Activated T-helper 1 cell treated with anti-CD3 and anti-CD28 coated beads, Interleukin-12 subunit alpha, Interleukin-12 subunit beta, Interleukin-2, Interleukin-4 antibody, amounts not matched to agents 30 ng/mL and 10 ng/mL and 1 ng/mL, durations not matched to agents 14 hours and 24 hours and 36 hours (primary cell): ENCODE measurements at regions of chr19 and their contacts with region 1.

Region 1: DNA sequence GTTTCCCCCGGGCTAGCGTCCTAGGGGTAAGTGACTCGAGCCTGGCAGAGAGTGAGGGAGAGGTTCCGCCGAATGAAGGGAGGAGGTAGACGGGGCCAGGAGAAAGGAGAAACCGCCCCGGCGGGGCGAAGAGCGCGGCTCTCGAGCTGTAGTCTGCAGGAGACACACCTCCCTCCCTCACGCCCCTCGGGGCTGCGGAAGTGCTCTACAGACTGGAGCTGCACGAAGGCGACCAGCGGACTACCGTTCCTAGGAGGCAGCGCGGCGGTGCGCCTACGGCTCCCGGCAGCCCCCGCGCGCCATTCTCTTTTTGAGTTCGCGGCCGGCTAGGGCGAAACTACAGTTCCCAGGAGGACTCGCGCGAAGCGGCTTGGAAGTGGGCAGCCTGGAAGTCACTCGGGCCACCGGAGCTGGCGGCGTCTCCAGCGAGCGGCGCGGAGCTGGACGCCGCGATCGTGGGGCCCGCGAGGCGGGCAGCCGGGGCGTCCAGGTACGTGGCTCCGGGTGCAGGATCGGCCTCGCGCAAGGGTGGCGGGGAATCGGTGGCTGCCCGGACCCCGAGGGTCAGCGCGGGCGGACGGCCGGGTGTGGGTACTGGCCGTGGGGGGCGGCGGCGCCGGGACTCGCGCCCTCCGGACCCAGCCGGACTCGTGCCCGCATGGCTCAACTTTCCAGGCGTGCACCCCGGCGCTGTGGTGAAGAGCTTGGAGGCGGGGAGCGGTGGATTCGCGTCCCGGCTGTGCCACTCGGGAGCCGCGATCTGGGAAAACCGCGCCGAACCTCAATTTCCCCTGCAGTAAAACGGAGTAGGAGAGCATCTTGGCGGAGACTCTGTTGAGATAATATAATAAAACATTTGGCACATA is at the start of gene SIPA1L3:
- DNase-seq: peak; percentile 91
- H3K4me3 Mint-ChIP-seq: peak within 1 kb of the TSS; percentile 93
- H3K27ac Mint-ChIP-seq: peak within 1 kb of the TSS; percentile 68
- H3K4me1 Mint-ChIP-seq: peaks cover 17% of the 10 kb centered on the region
- H3K27me3 Mint-ChIP-seq: peaks cover 2% of the 10 kb centered on the region
- total RNA-seq, gene SIPA1L3: 16.7 and 18.4 TPM in 2 replicates

Region 2: GRCh38 chr19:37217855-37218591 is 689.1 kb before region 1 on chr19 and contains the start of gene ZNF383:
- intact Hi-C with region 1: loop called (anchors 2 kb)
- DNase-seq: peak; percentile 78
- H3K4me3 Mint-ChIP-seq: peak within 1 kb of the TSS; percentile 96
- H3K27ac Mint-ChIP-seq: peak within 1 kb of the TSS; percentile 90
- H3K4me1 Mint-ChIP-seq: peaks cover 20% of the 10 kb centered on the region
- H3K27me3 Mint-ChIP-seq: no peaks in the 10 kb centered on the region
- total RNA-seq, gene ZNF383: 6.3 TPM in 2 replicates

Region 3: DNA sequence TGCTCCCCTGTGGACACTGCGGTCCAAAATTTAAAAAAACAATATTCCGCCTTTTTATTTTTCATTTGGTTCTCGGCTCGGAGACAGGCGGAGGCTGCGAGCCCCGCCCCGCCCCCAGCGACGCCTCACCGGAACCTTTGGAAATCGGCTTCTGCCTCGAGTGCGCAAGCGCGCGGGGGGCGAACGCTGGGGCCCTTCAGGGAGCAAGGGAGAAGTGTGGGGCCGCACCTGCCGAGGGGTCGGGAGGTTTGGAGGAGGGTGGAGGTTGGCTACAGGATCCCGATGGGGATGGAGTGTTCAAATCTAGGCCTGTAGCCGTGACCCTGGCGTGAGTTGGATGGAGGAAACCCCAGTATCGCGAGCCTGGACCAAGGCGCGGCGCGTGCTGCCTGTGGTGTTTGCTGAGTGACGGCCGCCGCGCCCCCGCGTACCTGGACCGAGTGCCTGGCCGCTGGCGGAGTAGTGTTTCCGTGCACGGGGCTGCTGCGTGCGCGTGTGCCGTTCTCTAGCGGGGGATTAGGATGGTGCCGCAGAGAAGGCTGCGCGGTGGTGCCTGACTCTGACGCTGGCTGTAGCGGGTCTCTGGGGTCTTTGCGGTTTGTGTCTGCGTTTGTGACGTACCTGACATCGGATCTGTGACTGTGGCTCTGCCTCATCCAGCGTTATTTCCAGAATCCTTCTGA is 251.3 kb before region 1 on chr19:
- intact Hi-C with region 1: loop called (anchors 1 kb)
- DNase-seq: peak; percentile 83
- H3K4me3 Mint-ChIP-seq: peak overlapping the region; percentile 90
- H3K27ac Mint-ChIP-seq: peak overlapping the region; percentile 93
- H3K4me1 Mint-ChIP-seq: peaks cover 28% of the 10 kb centered on the region
- H3K27me3 Mint-ChIP-seq: no peaks in the 10 kb centered on the region

Region 4: DNA sequence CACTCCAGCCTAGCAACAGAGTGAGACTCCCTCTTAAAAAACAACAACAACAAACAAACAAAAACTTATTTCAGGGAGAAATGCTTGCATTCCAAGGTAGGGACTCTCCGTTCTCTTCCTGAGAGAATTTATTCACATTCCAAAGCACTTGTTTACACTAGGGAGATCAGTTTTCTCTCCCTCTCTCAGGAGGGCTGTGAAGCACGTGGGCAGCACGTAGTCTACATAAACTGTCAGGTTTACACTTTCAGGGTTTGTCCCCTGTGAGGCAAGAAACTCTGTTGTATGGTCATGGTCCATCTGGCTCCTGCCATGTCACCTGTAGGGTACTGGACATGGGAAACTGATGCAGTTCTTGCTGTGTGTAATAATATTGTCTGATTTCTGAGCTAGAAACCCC is 32.3 kb before region 1 on chr19:
- intact Hi-C with region 1: no loop called
- DNase-seq: no peak
- H3K4me3 Mint-ChIP-seq: no peak overlapping the region
- H3K27ac Mint-ChIP-seq: no peak overlapping the region
- H3K4me1 Mint-ChIP-seq: no peaks in the 10 kb centered on the region
- H3K27me3 Mint-ChIP-seq: peaks cover 2% of the 10 kb centered on the region

Region 5: GRCh38 chr19:38049105-38049649 is 142.1 kb after region 1 on chr19:
- intact Hi-C with region 1: loop called (anchors 1 kb)
- DNase-seq: peak; percentile 61
- H3K4me3 Mint-ChIP-seq: peak overlapping the region; percentile 79
- H3K27ac Mint-ChIP-seq: peak overlapping the region; percentile 92
- H3K4me1 Mint-ChIP-seq: peaks cover 36% of the 10 kb centered on the region
- H3K27me3 Mint-ChIP-seq: no peaks in the 10 kb centered on the region

Region 6: GRCh38 chr19:38122402-38123093 is 215.4 kb after region 1 on chr19:
- intact Hi-C with region 1: no loop called
- DNase-seq: no peak
- H3K4me3 Mint-ChIP-seq: no peak overlapping the region
- H3K27ac Mint-ChIP-seq: no peak overlapping the region
- H3K4me1 Mint-ChIP-seq: no peaks in the 10 kb centered on the region
- H3K27me3 Mint-ChIP-seq: no peaks in the 10 kb centered on the region

Region 7: GRCh38 chr19:38229585-38230073 is 322.5 kb after region 1 on chr19:
- intact Hi-C with region 1: loop called (anchors 1 kb)
- DNase-seq: peak; percentile 68
- H3K4me3 Mint-ChIP-seq: no peak overlapping the region
- H3K27ac Mint-ChIP-seq: no peak overlapping the region
- H3K4me1 Mint-ChIP-seq: peaks cover 20% of the 10 kb centered on the region
- H3K27me3 Mint-ChIP-seq: peaks cover 51% of the 10 kb centered on the region

Region 8: GRCh38 chr19:38361633-38362075 is 454.6 kb after region 1 on chr19:
- intact Hi-C with region 1: loop called (anchors 2 kb)
- DNase-seq: peak; percentile 69
- H3K4me3 Mint-ChIP-seq: peak overlapping the region; percentile 90
- H3K27ac Mint-ChIP-seq: peak overlapping the region; percentile 61
- H3K4me1 Mint-ChIP-seq: peaks cover 22% of the 10 kb centered on the region
- H3K27me3 Mint-ChIP-seq: peaks cover 30% of the 10 kb centered on the region